PC-3 (cell line): ENCODE measurements at regions of chr1 and their contacts with region 1.

Region 1: GRCh38 chr1:42462828-42463763 is at the start of gene CCDC30:
- DNase-seq: peak; percentile 99
- ATAC-seq: peak; percentile 98
- H3K4me3 ChIP-seq: peak within 1 kb of the TSS; percentile 85
- H3K27ac ChIP-seq: peak within 1 kb of the TSS; percentile 29
- H3K4me1 ChIP-seq: peaks cover 18% of the 10 kb centered on the region
- H3K27me3 ChIP-seq: no peaks in the 10 kb centered on the region
- CTCF ChIP-seq: no peak
- total RNA-seq, gene CCDC30: 0.46 and 0.58 TPM in 2 replicates

Region 2: GRCh38 chr1:41898191-41898713 is 564.8 kb before region 1 on chr1:
- CTCF ChIA-PET with region 1: no interaction called
- POLR2A ChIA-PET with region 1: no interaction called
- intact Hi-C with region 1: no loop called
- DNase-seq: peak; percentile 54
- ATAC-seq: peak; percentile 7
- H3K4me3 ChIP-seq: no peak overlapping the region
- H3K27ac ChIP-seq: peak overlapping the region; percentile 54
- H3K4me1 ChIP-seq: peaks cover 70% of the 10 kb centered on the region
- H3K27me3 ChIP-seq: no peaks in the 10 kb centered on the region
- CTCF ChIP-seq: no peak

Region 3: GRCh38 chr1:42173155-42173933 is 289.8 kb before region 1 on chr1:
- CTCF ChIA-PET with region 1: no interaction called
- POLR2A ChIA-PET with region 1: interaction called, 18 read pairs
- intact Hi-C with region 1: no loop called
- DNase-seq: peak; percentile 56
- ATAC-seq: peak; percentile 31
- H3K4me3 ChIP-seq: no peak overlapping the region
- H3K27ac ChIP-seq: peak overlapping the region; percentile 88
- H3K4me1 ChIP-seq: peaks cover 64% of the 10 kb centered on the region
- H3K27me3 ChIP-seq: no peaks in the 10 kb centered on the region
- CTCF ChIP-seq: peak; percentile 98

Region 4: GRCh38 chr1:42368096-42368795 is 94.8 kb before region 1 on chr1:
- CTCF ChIA-PET with region 1: no interaction called
- POLR2A ChIA-PET with region 1: no interaction called
- intact Hi-C with region 1: no loop called
- DNase-seq: no peak
- ATAC-seq: no peak
- H3K4me3 ChIP-seq: no peak overlapping the region
- H3K27ac ChIP-seq: no peak overlapping the region
- H3K4me1 ChIP-seq: no peaks in the 10 kb centered on the region
- H3K27me3 ChIP-seq: no peaks in the 10 kb centered on the region; the same call in 1 of the 2 replicates
- CTCF ChIP-seq: no peak

Region 5: DNA sequence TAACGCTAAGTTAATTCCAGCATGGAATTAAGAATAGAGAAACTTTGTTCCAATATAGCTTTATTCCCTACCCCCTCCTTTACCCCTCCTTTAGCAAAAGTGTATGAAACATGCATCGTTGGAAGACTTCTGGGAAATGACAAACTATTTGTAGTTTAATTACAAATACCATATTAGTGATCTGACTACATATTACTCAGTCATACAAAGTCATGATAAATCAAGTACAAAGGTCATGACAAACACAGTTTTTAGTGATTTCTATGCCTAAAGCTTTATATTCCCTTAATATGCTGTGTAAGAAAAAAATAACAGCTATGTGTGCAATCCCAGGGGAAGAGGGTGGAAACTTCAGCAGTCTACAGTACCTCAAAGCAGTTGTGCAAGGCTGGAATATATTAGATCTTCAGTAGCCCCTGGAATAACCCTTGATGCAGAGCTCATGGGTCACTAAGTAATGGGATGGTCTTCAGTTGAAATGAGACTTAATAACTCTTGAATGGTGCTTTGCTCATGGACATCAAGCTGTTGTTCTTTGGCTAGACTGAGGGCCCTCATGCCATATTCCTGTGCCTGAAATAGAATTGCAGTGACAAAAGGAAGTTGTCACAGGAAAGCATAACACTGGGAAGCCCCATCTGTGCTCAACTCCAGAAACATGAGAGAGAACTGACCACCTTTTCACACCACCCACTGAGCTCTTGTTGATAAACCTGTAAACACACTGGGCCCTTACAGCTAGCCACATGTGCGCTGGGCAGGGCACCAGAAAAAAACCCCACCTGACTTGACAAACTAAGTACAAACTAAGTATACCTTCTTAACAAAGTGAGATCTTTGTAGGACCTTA is 32.6 kb before region 1 on chr1:
- CTCF ChIA-PET with region 1: no interaction called
- POLR2A ChIA-PET with region 1: interaction called, 8 read pairs
- intact Hi-C with region 1: loop called (anchors 2 kb)
- DNase-seq: peak; percentile 75
- ATAC-seq: peak; percentile 59
- H3K4me3 ChIP-seq: no peak overlapping the region
- H3K27ac ChIP-seq: peak overlapping the region; percentile 57
- H3K4me1 ChIP-seq: peaks cover 49% of the 10 kb centered on the region
- H3K27me3 ChIP-seq: no peaks in the 10 kb centered on the region
- CTCF ChIP-seq: no peak

Region 6: DNA sequence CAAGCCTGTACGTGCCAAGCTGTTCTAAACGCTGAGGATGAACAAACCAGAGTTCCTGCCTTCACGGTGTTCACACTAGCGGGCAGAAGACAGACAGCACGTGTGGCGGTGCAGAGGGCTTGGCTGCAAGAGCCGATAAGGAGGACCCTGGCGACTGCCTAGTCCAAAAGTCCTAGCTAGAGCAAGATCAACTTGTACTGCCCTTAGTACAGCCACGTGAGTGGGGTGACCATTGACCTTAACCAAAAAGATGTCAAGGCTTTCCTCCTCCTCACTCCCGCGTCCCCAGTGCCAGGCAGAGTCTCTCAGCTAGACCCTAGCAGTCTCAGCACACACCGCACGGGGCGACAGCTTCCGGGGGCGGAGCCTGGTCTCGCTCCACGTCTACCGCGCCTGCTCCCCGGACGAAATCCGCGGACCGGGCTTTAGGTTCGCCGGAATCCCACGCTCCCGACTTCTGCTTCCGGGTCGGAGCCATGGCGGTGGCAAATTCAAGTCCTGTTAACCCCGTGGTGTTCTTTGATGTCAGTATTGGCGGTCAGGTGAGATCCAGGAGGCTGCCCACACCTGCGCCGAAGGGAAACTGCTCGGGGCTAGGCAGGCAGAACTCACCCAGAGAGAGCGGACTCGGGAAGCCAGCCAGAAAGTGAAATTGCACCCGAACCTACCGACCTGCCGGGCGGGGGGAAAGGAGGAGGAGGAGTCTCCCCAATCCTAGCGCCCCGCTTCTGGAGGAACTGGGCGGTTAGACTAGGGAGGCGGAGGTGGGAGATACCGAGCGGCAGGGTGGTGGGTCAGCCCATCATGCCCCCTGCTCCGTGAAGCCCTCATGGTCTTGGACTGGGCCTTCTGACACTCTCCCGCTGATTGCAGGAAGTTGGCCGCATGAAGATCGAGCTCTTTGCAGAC is 195.1 kb after region 1 on chr1 and contains the start of gene PPIH:
- CTCF ChIA-PET with region 1: no interaction called
- POLR2A ChIA-PET with region 1: no interaction called
- intact Hi-C with region 1: loop called (anchors 10 kb)
- DNase-seq: peak; percentile 92
- ATAC-seq: peak; percentile 99
- H3K4me3 ChIP-seq: peak within 1 kb of the TSS; percentile 97
- H3K27ac ChIP-seq: peak within 1 kb of the TSS; percentile 64
- H3K4me1 ChIP-seq: peaks cover 22% of the 10 kb centered on the region
- H3K27me3 ChIP-seq: peaks cover 6% of the 10 kb centered on the region; the same call in 1 of the 2 replicates
- CTCF ChIP-seq: no peak
- total RNA-seq, gene PPIH: 81.5 and 103 TPM in 2 replicates